ENCODE measurements at regions of chr6 and their contacts with region 1.

Region 1: DNA sequence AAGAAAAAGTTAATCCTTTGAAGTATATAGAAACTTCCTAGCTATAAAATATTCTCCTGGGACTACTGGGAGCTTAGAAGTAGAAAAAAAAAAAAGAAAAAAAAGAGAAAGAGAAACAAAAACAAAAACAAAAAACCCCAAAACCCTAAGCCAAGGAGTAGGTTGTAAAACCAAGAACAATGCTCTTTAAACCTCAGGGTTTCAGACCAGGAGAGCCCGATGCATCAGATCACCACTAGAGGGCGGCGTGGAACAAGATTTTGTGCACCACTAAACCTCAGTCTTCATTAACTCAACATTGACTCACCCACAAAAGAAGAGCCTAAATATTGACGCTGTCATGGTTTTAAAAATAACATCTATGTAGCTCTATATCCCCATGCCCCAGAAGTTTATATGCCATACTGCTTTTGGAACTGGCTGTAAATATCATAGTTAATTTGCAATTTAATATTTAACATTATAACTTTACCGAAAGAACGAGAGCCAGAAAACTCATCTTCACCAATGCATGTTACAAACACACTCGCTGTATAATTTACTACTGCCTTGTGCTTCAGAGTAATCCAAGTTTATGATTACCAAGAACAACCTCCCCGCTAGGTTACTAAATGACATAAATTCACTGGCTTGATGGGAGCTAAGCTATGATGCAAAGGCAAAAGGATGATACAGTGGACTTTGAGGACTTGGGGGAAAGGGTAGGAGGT is 19.2 kb downstream of the MCUR1 start:
- DNase-seq: peak in 1 of 2 donors; percentile 90
- H3K4me3 ChIP-seq: no peak overlapping the region
- H3K27ac ChIP-seq: no peak overlapping the region
- H3K4me1 ChIP-seq: peaks cover 0 to 3% of the 10 kb centered on the region in 2 donors
- H3K27me3 ChIP-seq: no peaks in the 10 kb centered on the region
- CTCF ChIP-seq: peak; percentile 72 to 95 (median 86)

Region 2: DNA sequence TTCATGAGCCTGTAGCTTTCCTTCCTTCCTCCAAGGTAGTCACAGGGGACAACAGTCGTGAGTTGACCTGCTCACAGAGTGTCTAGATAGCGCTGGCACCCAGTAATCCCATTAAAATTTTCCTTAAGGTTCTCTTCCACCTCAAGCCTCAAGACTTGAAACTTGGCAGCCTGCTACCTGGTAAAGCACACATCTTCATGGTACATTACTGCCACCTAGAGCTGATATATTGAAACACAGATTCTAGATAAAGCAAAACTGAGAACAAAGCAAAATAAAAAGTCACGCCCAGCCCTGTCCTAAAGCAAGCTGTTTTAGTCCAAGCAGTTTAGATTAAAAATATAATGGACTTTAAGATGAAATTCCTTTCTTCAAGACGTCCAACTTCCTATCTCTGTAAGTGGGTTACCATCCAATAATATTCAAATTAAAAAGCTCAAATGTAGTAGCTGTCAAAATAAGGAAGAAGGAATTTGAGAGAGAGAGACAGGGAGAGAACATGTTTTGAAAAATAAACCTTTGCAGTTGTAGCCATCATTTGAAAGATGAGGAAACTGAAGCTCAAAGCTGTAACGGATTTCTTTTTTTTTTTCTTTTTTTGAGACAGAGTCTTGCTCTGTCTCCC is 271.7 kb after region 1 on chr6:
- intact Hi-C with region 1: loop called (anchors 5 kb)
- DNase-seq: no peak
- H3K4me3 ChIP-seq: no peak overlapping the region
- H3K27ac ChIP-seq: no peak overlapping the region
- H3K4me1 ChIP-seq: no peaks in the 10 kb centered on the region
- H3K27me3 ChIP-seq: no peaks in the 10 kb centered on the region
- CTCF ChIP-seq: peak; percentile 44 to 72 (median 47)

Region 3: GRCh38 chr6:14100138-14100537 is 304.9 kb after region 1 on chr6:
- intact Hi-C with region 1: no loop called
- DNase-seq: no peak
- H3K4me3 ChIP-seq: no peak overlapping the region
- H3K27ac ChIP-seq: no peak overlapping the region
- H3K4me1 ChIP-seq: no peaks in the 10 kb centered on the region
- H3K27me3 ChIP-seq: no peaks in the 10 kb centered on the region
- CTCF ChIP-seq: no peak

Measured in ascending aorta (tissue), 2 donors.